Mammary epithelial cell (primary cell): ENCODE measurements at regions of chr13 and their contacts with region 1.

Region 1: DNA sequence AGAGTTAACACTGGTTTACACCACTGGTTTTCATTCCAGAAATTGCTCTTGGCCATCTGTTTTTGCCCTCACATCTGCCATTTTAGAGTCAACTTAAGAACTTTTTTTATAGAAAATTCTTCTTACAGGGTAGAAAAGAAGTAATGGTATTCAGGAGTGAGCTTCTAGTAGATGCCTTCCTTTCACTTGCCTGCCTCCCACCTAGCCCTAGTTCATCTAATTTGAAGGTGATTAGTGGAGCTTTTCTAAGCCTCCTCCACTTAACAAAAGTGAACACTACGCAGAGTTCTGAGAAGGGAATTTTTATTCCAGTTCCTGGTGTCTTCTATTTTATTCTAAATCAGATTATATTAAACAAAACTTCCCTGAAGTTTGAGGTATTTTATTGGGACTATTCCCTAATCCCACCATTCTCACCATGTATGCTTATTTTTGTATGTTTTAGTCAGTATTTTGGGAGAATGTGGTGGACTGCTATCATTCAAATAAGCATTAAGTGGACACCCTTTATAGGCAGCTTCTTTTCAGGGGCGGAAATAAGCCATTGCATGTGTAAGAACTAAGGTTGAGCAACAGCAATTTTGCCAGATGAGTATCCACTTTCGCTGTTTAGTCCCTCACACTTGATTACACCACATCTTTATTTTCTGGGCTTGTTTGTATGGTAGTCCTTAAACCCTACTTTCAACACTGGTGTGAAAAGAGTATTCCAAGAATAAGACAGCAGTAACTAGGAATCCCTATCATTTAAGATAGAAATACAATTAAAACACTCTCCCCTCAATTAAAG is 156.9 kb downstream of the ENOX1 start:
- DNase-seq: no peak
- H3K4me3 ChIP-seq: no peak overlapping the region
- H3K27ac ChIP-seq: no peak overlapping the region
- H3K4me1 ChIP-seq: no peaks in the 10 kb centered on the region
- H3K27me3 ChIP-seq: no peaks in the 10 kb centered on the region
- CTCF ChIP-seq: no peak

Region 2: GRCh38 chr13:43572656-43573367 is 57.1 kb before region 1 on chr13:
- CTCF ChIA-PET with region 1: no interaction called
- dilution Hi-C with region 1: no loop called
- in situ Hi-C with region 1: no loop called
- intact Hi-C with region 1: no loop called
- DNase-seq: peak; percentile 69
- H3K4me3 ChIP-seq: no peak overlapping the region
- H3K27ac ChIP-seq: peak overlapping the region; percentile 63
- H3K4me1 ChIP-seq: peaks cover 25% of the 10 kb centered on the region
- H3K27me3 ChIP-seq: no peaks in the 10 kb centered on the region
- CTCF ChIP-seq: no peak

Region 3: GRCh38 chr13:43608400-43609137 is 21.3 kb before region 1 on chr13:
- CTCF ChIA-PET with region 1: no interaction called
- dilution Hi-C with region 1: no loop called
- in situ Hi-C with region 1: no loop called
- intact Hi-C with region 1: no loop called
- DNase-seq: no peak
- H3K4me3 ChIP-seq: no peak overlapping the region
- H3K27ac ChIP-seq: no peak overlapping the region
- H3K4me1 ChIP-seq: no peaks in the 10 kb centered on the region
- H3K27me3 ChIP-seq: no peaks in the 10 kb centered on the region
- CTCF ChIP-seq: no peak

Region 4: GRCh38 chr13:43686557-43686956 is 56.7 kb after region 1 on chr13:
- CTCF ChIA-PET with region 1: no interaction called
- dilution Hi-C with region 1: no loop called
- in situ Hi-C with region 1: no loop called
- intact Hi-C with region 1: loop called (anchors 5 kb)
- DNase-seq: peak; percentile 56
- H3K4me3 ChIP-seq: no peak overlapping the region
- H3K27ac ChIP-seq: no peak overlapping the region
- H3K4me1 ChIP-seq: no peaks in the 10 kb centered on the region
- H3K27me3 ChIP-seq: no peaks in the 10 kb centered on the region
- CTCF ChIP-seq: no peak